ENCODE measurements at regions of chr17 and their contacts with region 1.

Region 1: DNA sequence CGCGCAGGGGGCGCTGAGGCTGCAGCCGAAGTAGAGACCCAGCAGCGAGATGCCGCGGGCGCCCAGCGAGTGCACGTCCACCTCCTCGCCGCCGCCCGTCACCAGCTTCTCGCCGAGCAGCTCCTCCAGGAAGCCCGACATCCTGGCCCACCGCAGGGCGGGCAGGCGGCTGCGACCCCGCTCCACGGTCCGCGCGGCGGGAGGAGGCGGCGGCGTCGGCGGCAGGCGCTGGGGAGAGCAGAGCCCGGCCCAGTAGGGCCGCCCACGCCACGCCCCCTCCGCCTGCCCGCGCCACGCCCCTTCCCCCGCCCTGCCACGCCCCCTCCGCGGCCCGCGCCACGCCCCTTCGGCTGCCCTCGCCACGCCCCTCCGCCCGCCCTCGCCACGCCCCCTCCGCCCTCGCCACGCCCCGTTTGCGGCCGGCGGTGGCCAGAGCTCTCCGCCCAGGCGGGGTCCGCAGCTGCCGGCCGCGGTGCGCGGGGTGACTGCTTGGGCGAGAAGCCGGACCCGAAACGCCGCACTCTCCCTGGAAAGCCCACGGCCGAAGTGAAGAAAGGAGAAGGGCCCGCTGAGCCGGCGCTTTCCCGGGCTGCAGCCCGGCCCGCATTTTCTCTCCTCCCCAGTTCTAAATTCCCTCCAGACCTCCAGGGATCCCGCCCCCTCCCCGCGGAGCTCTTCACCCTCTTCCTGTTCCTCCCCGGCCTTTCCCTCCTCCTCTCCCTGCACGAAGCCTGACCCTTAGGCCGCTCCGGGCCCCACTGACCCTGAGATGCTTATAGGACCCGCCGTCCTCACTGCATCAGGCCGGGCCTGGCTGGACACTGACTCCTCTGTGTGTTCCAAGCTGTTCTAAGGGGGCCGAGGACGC is at the start of gene NXN:
- DNase-seq: peak; percentile 83
- ATAC-seq: peak; percentile 74
- H3K4me3 Mint-ChIP-seq: peak within 1 kb of the TSS; percentile 93
- H3K27ac Mint-ChIP-seq: peak within 1 kb of the TSS; percentile 96; the same call in 1 of the 2 replicates
- H3K4me1 Mint-ChIP-seq: peaks cover 37% of the 10 kb centered on the region
- H3K27me3 Mint-ChIP-seq: no peaks in the 10 kb centered on the region
- CTCF ChIP-seq: no peak
- total RNA-seq, gene NXN: 96.8 to 100 TPM (median 98.7 TPM) in 3 replicates

Region 2: GRCh38 chr17:794876-795275 is 184.9 kb before region 1 on chr17:
- CTCF ChIA-PET with region 1: interaction called, 190 read pairs
- POLR2A ChIA-PET with region 1: interaction called, 14 read pairs
- DNase-seq: peak; percentile 81
- ATAC-seq: peak; percentile 60
- H3K4me3 Mint-ChIP-seq: no peak overlapping the region
- H3K27ac Mint-ChIP-seq: peak overlapping the region; percentile 92
- H3K4me1 Mint-ChIP-seq: peaks cover 10% of the 10 kb centered on the region
- H3K27me3 Mint-ChIP-seq: no peaks in the 10 kb centered on the region
- CTCF ChIP-seq: peak; percentile 50

Region 3: GRCh38 chr17:850851-851763 is 128.7 kb before region 1 on chr17:
- CTCF ChIA-PET with region 1: interaction called, 20 read pairs
- POLR2A ChIA-PET with region 1: no interaction called
- DNase-seq: no peak
- ATAC-seq: no peak
- H3K4me3 Mint-ChIP-seq: no peak overlapping the region
- H3K27ac Mint-ChIP-seq: peak overlapping the region; percentile 87; the same call in 1 of the 2 replicates
- H3K4me1 Mint-ChIP-seq: peaks cover 63% of the 10 kb centered on the region
- H3K27me3 Mint-ChIP-seq: no peaks in the 10 kb centered on the region
- CTCF ChIP-seq: no peak

Region 4: GRCh38 chr17:915538-916201 is 64.1 kb before region 1 on chr17:
- CTCF ChIA-PET with region 1: interaction called, 12 read pairs
- POLR2A ChIA-PET with region 1: no interaction called
- DNase-seq: no peak
- ATAC-seq: peak; percentile 15; the same call in 1 of the 2 replicates
- H3K4me3 Mint-ChIP-seq: no peak overlapping the region
- H3K27ac Mint-ChIP-seq: peak overlapping the region; percentile 99
- H3K4me1 Mint-ChIP-seq: peaks cover 78% of the 10 kb centered on the region
- H3K27me3 Mint-ChIP-seq: no peaks in the 10 kb centered on the region
- CTCF ChIP-seq: no peak

Region 5: DNA sequence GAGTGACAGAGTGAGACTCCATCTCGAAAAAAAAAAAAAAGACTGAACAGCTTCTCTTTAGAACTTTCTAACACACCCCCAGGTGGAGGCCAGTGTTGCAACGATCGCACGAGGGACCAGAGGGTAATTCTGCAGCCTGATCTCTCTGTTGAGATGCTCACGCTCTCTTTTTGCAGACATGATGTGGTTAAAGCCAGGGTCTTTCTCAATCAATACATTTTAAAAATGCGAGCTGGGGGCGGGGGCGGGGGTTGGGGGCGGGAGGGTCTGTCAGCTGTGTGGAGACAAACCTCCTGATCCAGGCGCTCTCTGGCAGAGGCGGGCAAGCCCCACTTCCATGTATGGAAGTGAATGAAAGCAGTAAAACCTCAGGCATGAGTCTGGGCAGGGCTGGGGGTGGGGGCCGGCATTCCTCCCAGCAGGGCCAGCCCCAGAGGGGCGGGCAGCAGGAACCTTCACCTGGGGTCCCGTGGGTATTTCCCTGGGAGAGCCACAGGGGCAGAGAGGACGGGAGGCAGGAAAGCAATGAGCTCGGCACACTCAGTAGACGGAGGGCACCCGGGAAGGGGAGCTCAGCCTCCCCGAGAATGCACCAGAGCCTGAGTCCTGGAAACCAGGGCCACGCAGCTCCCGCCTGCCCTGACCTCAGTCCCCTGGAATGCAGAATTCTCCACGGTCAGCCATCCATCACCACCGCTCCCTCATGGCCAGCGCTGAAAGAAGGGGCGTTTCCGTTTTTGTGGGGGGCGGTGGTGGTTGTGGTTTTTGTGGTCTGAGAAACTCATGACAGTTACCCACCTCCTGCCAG is 28.2 kb before region 1 on chr17:
- CTCF ChIA-PET with region 1: interaction called, 6 read pairs
- POLR2A ChIA-PET with region 1: interaction called, 32 read pairs
- DNase-seq: peak; percentile 78
- ATAC-seq: peak; percentile 86
- H3K4me3 Mint-ChIP-seq: peak overlapping the region; percentile 41; the same call in 1 of the 2 replicates
- H3K27ac Mint-ChIP-seq: peak overlapping the region; percentile 91
- H3K4me1 Mint-ChIP-seq: peaks cover 41% of the 10 kb centered on the region
- H3K27me3 Mint-ChIP-seq: no peaks in the 10 kb centered on the region
- CTCF ChIP-seq: no peak

Region 6: GRCh38 chr17:996554-997344 is 17.0 kb after region 1 on chr17 and contains the start of gene TIMM22:
- CTCF ChIA-PET with region 1: interaction called, 58 read pairs
- POLR2A ChIA-PET with region 1: no interaction called
- DNase-seq: peak; percentile 96
- ATAC-seq: peak; percentile 97
- H3K4me3 Mint-ChIP-seq: peak within 1 kb of the TSS; percentile 90
- H3K27ac Mint-ChIP-seq: peak within 1 kb of the TSS; percentile 99
- H3K4me1 Mint-ChIP-seq: peaks cover 8% of the 10 kb centered on the region
- H3K27me3 Mint-ChIP-seq: peaks cover 19% of the 10 kb centered on the region
- CTCF ChIP-seq: peak; percentile 79
- total RNA-seq, gene TIMM22: 17.2 to 18.0 TPM (median 17.4 TPM) in 3 replicates

Region 7: DNA sequence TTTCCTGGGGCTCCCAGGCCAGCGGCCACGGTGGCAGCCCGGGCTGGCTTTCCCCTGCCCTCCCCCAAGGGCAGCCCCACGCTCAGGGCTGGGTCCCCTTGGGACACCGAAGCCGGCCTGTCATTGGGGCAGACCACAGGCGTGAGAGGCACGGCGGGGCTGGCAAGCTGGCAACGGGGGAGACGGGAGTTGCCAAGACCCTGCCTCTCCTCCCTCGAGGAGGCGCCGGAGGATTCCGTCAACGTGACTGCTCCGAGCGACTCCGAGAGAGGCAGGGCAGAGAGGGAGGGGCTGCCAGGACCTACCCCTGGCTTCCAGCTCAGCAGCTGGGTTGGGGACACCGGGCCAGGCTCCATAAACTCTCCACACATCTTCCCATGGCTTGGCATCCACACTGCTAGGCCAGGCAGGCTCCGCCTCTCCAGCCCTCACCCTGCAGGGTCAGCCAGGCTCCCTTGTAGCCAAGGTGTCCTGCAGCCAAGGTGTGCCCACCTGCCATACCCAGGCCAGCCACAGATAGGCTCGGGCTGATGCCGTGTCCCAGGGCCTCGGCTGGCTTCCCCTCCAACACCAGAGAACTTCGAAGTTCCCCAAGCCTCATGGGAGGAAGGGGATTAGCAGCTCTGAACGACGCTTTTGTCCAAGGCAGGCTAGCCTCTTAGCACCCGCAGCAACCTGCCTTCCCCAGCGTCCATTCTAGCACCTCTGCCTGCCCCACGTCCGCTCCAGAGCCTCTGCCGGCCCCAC is 42.7 kb after region 1 on chr17:
- CTCF ChIA-PET with region 1: no interaction called
- POLR2A ChIA-PET with region 1: no interaction called
- DNase-seq: no peak
- ATAC-seq: 0 out of 2 replicates have a peak, but pooled peaks have one; percentile 33
- H3K4me3 Mint-ChIP-seq: no peak overlapping the region
- H3K27ac Mint-ChIP-seq: 0 out of 2 replicates have a peak overlapping the region, but pooled peaks have one; percentile 15
- H3K4me1 Mint-ChIP-seq: no peaks in the 10 kb centered on the region
- H3K27me3 Mint-ChIP-seq: no peaks in the 10 kb centered on the region
- CTCF ChIP-seq: no peak

Region 8: GRCh38 chr17:1034652-1035210 is 55.0 kb after region 1 on chr17:
- CTCF ChIA-PET with region 1: no interaction called
- POLR2A ChIA-PET with region 1: no interaction called
- DNase-seq: no peak
- ATAC-seq: no peak
- H3K4me3 Mint-ChIP-seq: no peak overlapping the region
- H3K27ac Mint-ChIP-seq: no peak overlapping the region
- H3K4me1 Mint-ChIP-seq: peaks cover 8% of the 10 kb centered on the region
- H3K27me3 Mint-ChIP-seq: peaks cover 18% of the 10 kb centered on the region
- CTCF ChIP-seq: no peak

Region 9: DNA sequence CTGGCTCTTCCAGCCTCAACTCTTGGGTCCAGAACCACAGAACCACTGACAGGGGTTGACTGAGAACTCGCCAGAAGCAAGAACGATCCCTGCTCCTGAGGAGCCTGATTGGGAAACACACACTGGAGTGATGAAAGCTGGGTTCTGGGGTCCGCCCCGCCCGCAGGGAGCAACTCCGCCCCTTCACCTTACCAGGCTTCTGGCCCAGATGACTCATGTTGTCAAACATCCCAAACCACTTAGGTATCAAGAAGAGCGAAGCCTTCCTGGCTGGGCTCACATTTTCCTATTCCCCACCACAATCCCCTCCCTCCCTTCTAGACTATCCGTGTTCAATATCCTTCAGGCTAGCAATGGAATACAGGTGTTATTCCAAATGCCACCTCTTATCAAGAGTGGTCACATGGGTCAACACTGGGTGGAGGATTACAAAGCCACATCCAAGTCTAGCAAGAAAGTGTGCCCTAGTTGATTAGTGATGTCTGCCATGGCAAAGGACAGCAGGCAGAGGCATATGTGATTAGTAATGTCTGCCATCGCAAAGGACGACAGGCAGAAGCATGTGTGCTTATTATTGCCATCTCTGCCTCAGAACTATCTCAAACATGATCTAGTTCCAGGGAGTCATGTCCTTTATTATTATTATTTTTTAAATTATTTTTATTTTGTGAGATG is 87.6 kb after region 1 on chr17:
- CTCF ChIA-PET with region 1: no interaction called
- POLR2A ChIA-PET with region 1: no interaction called
- DNase-seq: no peak
- ATAC-seq: no peak
- H3K4me3 Mint-ChIP-seq: no peak overlapping the region
- H3K27ac Mint-ChIP-seq: no peak overlapping the region
- H3K4me1 Mint-ChIP-seq: no peaks in the 10 kb centered on the region
- H3K27me3 Mint-ChIP-seq: 0 out of 2 replicates have a peak, but pooled peaks cover 2% of the 10 kb centered on the region
- CTCF ChIP-seq: no peak

Measured in WTC11 (cell line).